ENCODE measurements at regions of chr7 and their contacts with region 1.

Region 1: DNA sequence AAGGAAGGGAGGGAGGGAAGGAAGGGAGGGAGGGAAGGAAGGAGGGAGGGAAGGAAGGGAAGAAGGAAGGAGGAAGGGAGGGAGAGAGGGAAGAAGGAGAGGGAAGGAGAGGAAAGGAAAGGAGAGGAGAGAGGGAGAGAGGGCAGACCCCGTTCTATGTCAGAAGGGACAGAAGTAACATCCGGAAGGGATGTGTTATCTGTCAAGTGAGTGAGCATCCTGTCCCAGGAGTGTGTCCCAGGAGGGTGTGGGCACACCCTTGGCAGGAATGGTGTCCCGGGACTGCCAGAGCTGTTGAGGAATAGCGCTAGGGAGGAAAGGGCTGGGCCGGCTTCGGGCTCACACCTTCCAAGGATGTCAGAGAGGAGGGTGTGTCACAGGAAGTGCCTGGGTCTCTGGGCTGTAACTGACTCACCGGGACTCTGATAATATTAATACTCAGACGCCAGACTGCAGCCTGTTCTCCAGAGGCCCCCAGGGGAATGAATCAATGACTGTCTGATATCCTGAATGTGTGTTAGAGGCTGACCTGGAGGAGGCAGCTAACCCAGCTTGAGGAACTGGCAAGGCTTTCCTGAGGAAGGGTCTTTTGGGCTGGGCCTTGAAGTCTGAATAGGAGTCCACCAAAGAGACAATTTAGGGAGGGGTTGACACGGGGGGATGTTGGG is 125.6 kb upstream of the TNRC18 start:
- DNase-seq: peak; percentile 98
- H3K27ac ChIP-seq: peak overlapping the region; percentile 100
- CTCF ChIP-seq: no peak

Region 2: GRCh38 chr7:5320391-5320790 is 228.8 kb before region 1 on chr7:
- CTCF ChIA-PET with region 1: no interaction called
- POLR2A ChIA-PET with region 1: no interaction called
- DNase-seq: no peak
- H3K27ac ChIP-seq: no peak overlapping the region
- CTCF ChIP-seq: no peak

Region 3: GRCh38 chr7:5567790-5568189 is 18.6 kb after region 1 on chr7:
- CTCF ChIA-PET with region 1: interaction called, 4 read pairs
- POLR2A ChIA-PET with region 1: interaction called, 14 read pairs
- DNase-seq: no peak
- H3K27ac ChIP-seq: peak overlapping the region; percentile 30
- CTCF ChIP-seq: no peak

Measured in RWPE1 (cell line).